Activated CD4-positive, alpha-beta T cell treated with anti-CD3 and anti-CD28 coated beads for 36 hours (primary cell): ENCODE measurements at regions of chr11 and their contacts with region 1.

Region 1: GRCh38 chr11:132126973-132127899 is 756.8 kb downstream of the NTM start:
- DNase-seq: no peak
- ATAC-seq: no peak
- H3K4me3 Mint-ChIP-seq: no peak overlapping the region
- H3K27ac Mint-ChIP-seq: no peak overlapping the region
- H3K4me1 Mint-ChIP-seq: no peaks in the 10 kb centered on the region
- H3K27me3 Mint-ChIP-seq: peaks cover 2% of the 10 kb centered on the region

Region 2: GRCh38 chr11:131694526-131695424 is 432.5 kb before region 1 on chr11:
- CTCF ChIA-PET with region 1: no interaction called
- POLR2A ChIA-PET with region 1: no interaction called
- intact Hi-C with region 1: loop called in 1 of 2 experiments (anchors 1 kb)
- DNase-seq: peak; percentile 85
- ATAC-seq: peak; percentile 68
- H3K4me3 Mint-ChIP-seq: no peak overlapping the region
- H3K27ac Mint-ChIP-seq: no peak overlapping the region
- H3K4me1 Mint-ChIP-seq: no peaks in the 10 kb centered on the region
- H3K27me3 Mint-ChIP-seq: peaks cover 29% of the 10 kb centered on the region

Region 3: GRCh38 chr11:131924457-131925201 is 202.6 kb before region 1 on chr11:
- CTCF ChIA-PET with region 1: no interaction called
- POLR2A ChIA-PET with region 1: no interaction called
- intact Hi-C with region 1: no loop called
- DNase-seq: no peak
- ATAC-seq: no peak
- H3K4me3 Mint-ChIP-seq: no peak overlapping the region
- H3K27ac Mint-ChIP-seq: no peak overlapping the region
- H3K4me1 Mint-ChIP-seq: no peaks in the 10 kb centered on the region
- H3K27me3 Mint-ChIP-seq: peaks cover 6% of the 10 kb centered on the region